HEK293 (cell line): ENCODE measurements at regions of chr15 and their contacts with region 1.

Region 1: GRCh38 chr15:65638681-65639089 is 16.9 kb downstream of the SLC24A1 start:
- H3K4me3 ChIP-seq: no peak overlapping the region
- H3K27ac ChIP-seq: no peak overlapping the region
- H3K4me1 ChIP-seq: peaks cover 2% of the 10 kb centered on the region; the same call in 1 of the 2 replicates
- CTCF ChIP-seq: peak; percentile 79

Region 2: GRCh38 chr15:65212097-65212496 is 426.6 kb before region 1 on chr15:
- CTCF ChIA-PET with region 1: no interaction called
- POLR2A ChIA-PET with region 1: no interaction called
- H3K4me3 ChIP-seq: no peak overlapping the region
- H3K27ac ChIP-seq: no peak overlapping the region
- H3K4me1 ChIP-seq: no peaks in the 10 kb centered on the region
- CTCF ChIP-seq: no peak

Region 3: DNA sequence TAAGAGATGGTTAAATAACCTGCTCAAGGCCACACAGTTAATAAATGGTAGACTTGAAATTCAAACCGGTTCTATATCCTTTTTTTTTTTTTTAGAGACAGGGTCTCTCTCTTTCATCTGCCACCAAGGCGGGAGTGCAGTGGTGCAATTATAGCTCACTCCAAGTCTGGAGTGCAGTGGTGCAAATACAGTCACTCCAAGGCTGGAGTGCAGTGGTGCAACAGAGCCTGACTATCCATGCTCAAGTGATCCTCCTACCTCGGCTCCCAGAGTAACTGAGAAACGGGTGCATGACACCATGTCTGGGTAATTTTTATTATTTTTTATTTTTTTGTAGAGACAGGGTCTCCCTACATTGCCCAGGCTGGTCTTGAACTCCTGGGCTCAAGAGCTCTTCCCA is 144.6 kb before region 1 on chr15:
- CTCF ChIA-PET with region 1: no interaction called
- POLR2A ChIA-PET with region 1: no interaction called
- H3K4me3 ChIP-seq: no peak overlapping the region
- H3K27ac ChIP-seq: no peak overlapping the region
- H3K4me1 ChIP-seq: no peaks in the 10 kb centered on the region
- CTCF ChIP-seq: no peak

Region 4: GRCh38 chr15:65530314-65531122 is 108.2 kb before region 1 on chr15 and contains the start of gene HACD3:
- CTCF ChIA-PET with region 1: no interaction called
- POLR2A ChIA-PET with region 1: no interaction called
- H3K4me3 ChIP-seq: peak within 1 kb of the TSS; percentile 89
- H3K27ac ChIP-seq: peak within 1 kb of the TSS; percentile 99
- H3K4me1 ChIP-seq: peaks cover 30% of the 10 kb centered on the region
- CTCF ChIP-seq: peak; percentile 67

Region 5: GRCh38 chr15:65610871-65611718 is 27.6 kb before region 1 on chr15 and contains the start of gene INTS14:
- CTCF ChIA-PET with region 1: interaction called, 5 read pairs
- POLR2A ChIA-PET with region 1: interaction called, 14 read pairs
- H3K4me3 ChIP-seq: peak within 1 kb of the TSS; percentile 91
- H3K27ac ChIP-seq: peak within 1 kb of the TSS; percentile 80
- H3K4me1 ChIP-seq: peaks cover 7% of the 10 kb centered on the region; the same call in 1 of the 2 replicates
- CTCF ChIP-seq: peak; percentile 100

Region 6: DNA sequence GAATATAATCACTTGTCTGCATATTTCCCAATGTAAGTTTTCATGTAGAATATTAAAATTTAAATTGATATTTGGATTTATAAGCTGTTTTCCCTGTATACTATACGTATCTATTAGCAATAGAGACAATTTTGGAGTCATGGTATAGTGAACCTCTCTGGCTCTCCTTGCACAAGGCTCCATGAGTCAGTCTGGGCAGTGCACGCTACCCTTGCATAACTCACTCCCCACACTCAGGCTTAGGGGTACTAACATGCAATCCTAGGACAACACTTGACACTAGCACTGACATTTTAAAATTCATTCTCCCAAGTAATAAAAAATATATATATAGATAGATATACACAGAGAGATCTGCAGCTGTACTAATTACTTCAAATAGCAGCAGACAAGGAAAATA is 22.2 kb after region 1 on chr15:
- CTCF ChIA-PET with region 1: interaction called, 22 read pairs
- POLR2A ChIA-PET with region 1: no interaction called
- H3K4me3 ChIP-seq: no peak overlapping the region
- H3K27ac ChIP-seq: no peak overlapping the region
- H3K4me1 ChIP-seq: no peaks in the 10 kb centered on the region
- CTCF ChIP-seq: no peak

Region 7: DNA sequence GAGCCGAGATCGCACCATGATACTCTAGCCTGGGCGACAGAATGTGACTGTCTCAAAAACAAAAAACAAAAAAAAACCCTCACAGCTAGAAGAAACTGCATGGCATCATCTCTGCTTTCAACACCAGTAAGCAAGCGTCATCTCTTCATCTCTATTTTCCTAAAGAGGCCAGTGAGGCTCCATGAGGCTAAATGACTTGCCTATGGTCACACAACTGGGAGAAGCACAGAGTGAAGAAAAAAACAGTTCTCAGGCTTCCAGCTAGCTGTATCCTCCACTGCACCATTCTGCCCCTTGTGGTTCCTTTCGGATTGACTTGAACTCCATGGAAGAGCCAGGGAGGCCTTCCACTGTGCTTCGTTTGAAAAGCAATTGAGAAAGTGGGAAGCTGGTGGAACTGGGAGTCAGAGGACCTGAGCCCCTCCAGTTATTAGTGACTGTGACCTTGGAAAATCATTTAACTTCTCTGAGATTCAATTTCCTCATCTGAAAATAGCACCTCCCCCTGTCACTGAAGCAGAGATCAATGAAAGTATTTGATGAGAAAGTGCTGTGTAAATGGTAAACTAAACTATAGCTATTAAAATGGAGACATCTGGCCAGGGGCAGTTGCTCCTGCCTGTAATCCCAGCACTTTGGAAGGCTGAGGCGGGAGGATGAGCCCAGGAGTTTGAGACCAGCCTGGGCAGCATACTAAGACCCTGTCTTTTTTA is 185.5 kb after region 1 on chr15:
- CTCF ChIA-PET with region 1: interaction called, 27 read pairs
- POLR2A ChIA-PET with region 1: no interaction called
- H3K4me3 ChIP-seq: no peak overlapping the region
- H3K27ac ChIP-seq: no peak overlapping the region
- H3K4me1 ChIP-seq: peaks cover 3% of the 10 kb centered on the region; the same call in 1 of the 2 replicates
- CTCF ChIP-seq: peak; percentile 58; the same call in 1 of the 2 replicates

Region 8: GRCh38 chr15:65856821-65857455 is 218.3 kb after region 1 on chr15:
- CTCF ChIA-PET with region 1: interaction called, 30 read pairs
- POLR2A ChIA-PET with region 1: interaction called, 4 read pairs
- H3K4me3 ChIP-seq: no peak overlapping the region
- H3K27ac ChIP-seq: no peak overlapping the region
- H3K4me1 ChIP-seq: peaks cover 5% of the 10 kb centered on the region; the same call in 1 of the 2 replicates
- CTCF ChIP-seq: peak; percentile 73